ENCODE measurements at regions of chr3 and their contacts with region 1.

Region 1: DNA sequence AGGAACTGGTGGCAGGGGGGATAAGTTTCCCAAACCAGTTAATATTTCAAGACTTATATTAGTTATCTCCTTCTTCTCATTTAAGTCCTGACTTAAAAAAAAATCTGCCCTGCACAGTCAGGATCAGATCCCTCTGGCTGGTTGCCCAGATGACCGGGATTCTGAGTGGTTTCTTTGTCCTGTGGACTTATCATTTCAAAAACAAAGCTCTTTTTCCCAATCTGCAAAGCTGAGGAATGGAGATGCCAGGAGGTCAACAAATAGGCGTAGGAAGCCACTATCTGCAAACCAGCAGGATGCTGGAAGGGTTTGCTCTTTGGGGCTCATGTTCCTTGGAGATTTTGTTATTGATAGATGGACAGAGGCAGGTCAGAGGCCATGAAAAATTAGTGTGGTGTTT is 5.8 kb downstream of the C3orf20 start:
- DNase-seq: no peak
- ATAC-seq: no peak
- H3K4me3 ChIP-seq: no peak overlapping the region
- H3K27ac ChIP-seq: no peak overlapping the region
- H3K4me1 ChIP-seq: no peaks in the 10 kb centered on the region
- H3K27me3 ChIP-seq: no peaks in the 10 kb centered on the region
- CTCF ChIP-seq: no peak

Region 2: DNA sequence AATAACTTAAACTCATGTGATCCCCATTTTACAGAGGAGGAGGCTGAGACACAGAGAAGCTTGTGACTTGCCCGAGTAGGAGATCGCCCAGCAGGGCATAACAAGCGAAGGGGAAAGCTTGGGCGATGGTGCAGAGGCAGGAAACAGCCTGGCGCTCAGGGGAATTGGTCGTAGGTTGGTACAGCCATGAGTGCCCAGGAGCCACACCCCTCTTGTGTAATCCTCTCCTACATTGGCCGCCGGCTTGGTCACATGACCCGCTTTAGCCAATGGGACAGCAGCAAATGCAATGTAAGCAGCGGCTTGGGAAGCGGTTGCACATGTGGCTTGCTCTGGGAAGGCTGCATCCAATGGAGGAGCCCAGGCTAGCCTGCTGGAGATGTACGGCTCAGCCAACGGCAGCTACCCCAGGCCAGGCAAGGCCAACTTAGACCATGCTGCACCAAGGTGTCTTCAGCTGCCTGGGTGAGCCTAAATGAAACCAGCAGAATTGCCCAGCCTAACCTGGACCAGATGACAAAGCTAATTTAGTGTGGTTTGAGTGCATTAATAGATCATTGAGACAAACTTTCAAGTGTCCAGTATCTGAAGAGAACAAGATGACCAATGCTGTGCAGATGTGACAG is 328.6 kb before region 1 on chr3:
- intact Hi-C with region 1: no loop called
- DNase-seq: no peak
- ATAC-seq: no peak
- H3K4me3 ChIP-seq: no peak overlapping the region
- H3K27ac ChIP-seq: no peak overlapping the region
- H3K4me1 ChIP-seq: no peaks in the 10 kb centered on the region
- H3K27me3 ChIP-seq: no peaks in the 10 kb centered on the region
- CTCF ChIP-seq: no peak

Region 3: DNA sequence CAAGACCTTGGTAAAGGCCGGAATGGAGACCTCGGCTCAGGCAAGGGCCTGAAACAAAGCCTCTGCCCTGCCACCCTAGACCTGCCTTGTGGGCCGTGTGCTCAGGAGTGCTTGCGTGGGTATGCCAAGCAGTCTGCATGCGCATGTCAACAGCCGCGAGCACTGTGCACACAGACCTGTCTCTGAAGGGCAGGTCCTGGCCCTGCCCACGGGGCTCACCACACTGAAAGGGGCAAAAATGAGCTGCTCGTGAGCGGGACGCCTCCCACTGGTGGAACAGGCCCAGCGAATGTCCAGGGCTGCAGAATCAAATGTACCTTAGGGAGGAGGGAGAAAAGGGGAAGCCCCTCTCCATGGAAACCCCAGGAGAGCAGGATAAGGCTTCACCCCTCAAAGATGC is 93.7 kb after region 1 on chr3:
- intact Hi-C with region 1: loop called in 1 of 2 experiments (anchors 10 kb)
- DNase-seq: no peak
- ATAC-seq: no peak
- H3K4me3 ChIP-seq: no peak overlapping the region
- H3K27ac ChIP-seq: no peak overlapping the region
- H3K4me1 ChIP-seq: no peaks in the 10 kb centered on the region
- H3K27me3 ChIP-seq: no peaks in the 10 kb centered on the region
- CTCF ChIP-seq: no peak

Region 4: DNA sequence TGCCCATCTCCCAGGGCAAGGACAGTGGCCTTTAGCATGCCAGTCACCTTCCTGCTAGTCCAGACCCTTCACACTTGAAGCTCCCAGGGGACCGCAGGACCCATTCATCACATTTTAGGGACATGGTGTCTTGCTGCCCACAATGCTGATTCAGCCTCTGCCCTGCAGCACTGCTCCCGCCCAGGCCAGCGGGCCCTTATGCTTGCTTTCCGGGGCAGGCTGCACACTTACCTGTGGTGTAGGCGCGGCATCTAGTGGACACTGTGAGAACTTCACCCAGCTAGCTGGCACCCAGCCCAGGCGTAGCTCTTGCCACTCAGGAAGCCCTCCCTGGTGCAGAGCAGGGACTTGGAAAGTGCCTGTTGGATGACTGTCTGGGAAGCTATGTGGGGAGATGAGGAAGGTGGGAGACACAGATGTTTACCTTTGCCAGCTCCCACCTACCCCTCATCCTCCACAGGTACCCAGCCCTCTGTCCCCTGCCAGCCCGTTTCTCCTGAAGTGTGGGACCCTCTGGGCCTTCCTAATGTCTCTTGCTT is 240.4 kb after region 1 on chr3:
- intact Hi-C with region 1: loop called in 1 of 2 experiments (anchors 5 kb)
- DNase-seq: peak; percentile 83 to 93 (median 90)
- ATAC-seq: peak; percentile 97
- H3K4me3 ChIP-seq: no peak overlapping the region
- H3K27ac ChIP-seq: no peak overlapping the region
- H3K4me1 ChIP-seq: peaks cover 4 to 9% of the 10 kb centered on the region in 2 donors
- H3K27me3 ChIP-seq: no peaks in the 10 kb centered on the region
- CTCF ChIP-seq: peak; percentile 97 to 99

Measured in left lung (tissue), 14 donors.